Right cardiac atrium (tissue), 5 donors: ENCODE measurements at regions of chr20 and their contacts with region 1.

Region 1: DNA sequence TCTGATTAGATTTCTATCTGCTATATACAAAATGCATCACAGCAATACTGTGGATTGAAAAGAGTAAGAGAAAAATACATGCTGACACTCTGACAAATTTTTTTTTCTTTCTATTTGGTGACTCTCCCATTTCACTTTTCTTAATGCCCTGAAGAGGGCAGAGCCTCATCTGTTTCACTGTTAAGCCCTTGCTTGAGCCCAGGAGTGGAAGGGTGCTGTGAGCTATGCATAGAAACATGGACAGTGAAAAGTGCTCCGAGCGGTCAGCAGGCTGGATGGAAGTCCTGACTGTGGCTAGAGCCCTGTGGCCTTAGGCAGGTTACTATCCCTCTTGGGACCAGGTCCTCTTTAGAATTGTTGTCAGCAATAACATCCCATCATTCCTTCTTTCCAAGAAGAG is 17.4 kb upstream of the CSE1L start:
- DNase-seq: no peak
- ATAC-seq: no peak
- H3K4me3 ChIP-seq: no peak overlapping the region
- H3K27ac ChIP-seq: no peak overlapping the region
- H3K4me1 ChIP-seq: no peaks in the 10 kb centered on the region
- H3K27me3 ChIP-seq: no peaks in the 10 kb centered on the region

Region 2: GRCh38 chr20:49078296-49078695 is 49.6 kb after region 1 on chr20:
- intact Hi-C with region 1: loop called in 1 of 4 experiments (anchors 10 kb)
- DNase-seq: no peak
- ATAC-seq: no peak
- H3K4me3 ChIP-seq: no peak overlapping the region
- H3K27ac ChIP-seq: no peak overlapping the region
- H3K4me1 ChIP-seq: no peaks in the 10 kb centered on the region
- H3K27me3 ChIP-seq: no peaks in the 10 kb centered on the region